Caco-2 (cell line): ENCODE measurements at regions of chr16 and their contacts with region 1.

Region 1: GRCh38 chr16:87950765-87951549 is at the start of gene BANP:
- DNase-seq: peak; percentile 99 to 100
- H3K4me3 ChIP-seq: peak within 1 kb of the TSS; percentile 85
- H3K4me3 Mint-ChIP-seq: peak within 1 kb of the TSS; percentile 93
- H3K27ac Mint-ChIP-seq: peak within 1 kb of the TSS; percentile 100
- H3K4me1 ChIP-seq: peaks cover 41% of the 10 kb centered on the region
- H3K4me1 Mint-ChIP-seq: peaks cover 45% of the 10 kb centered on the region
- H3K27me3 ChIP-seq: no peaks in the 10 kb centered on the region
- H3K27me3 Mint-ChIP-seq: no peaks in the 10 kb centered on the region
- CTCF ChIP-seq: peak; percentile 77 to 94
- total RNA-seq, gene BANP: 44.4 and 50.6 TPM in 2 replicates

Region 2: GRCh38 chr16:87834623-87835407 is 116.1 kb before region 1 on chr16:
- CTCF ChIA-PET with region 1: no interaction called
- POLR2A ChIA-PET with region 1: no interaction called
- intact Hi-C with region 1: no loop called
- DNase-seq: no peak
- H3K4me3 ChIP-seq: no peak overlapping the region
- H3K4me3 Mint-ChIP-seq: no peak overlapping the region
- H3K27ac Mint-ChIP-seq: no peak overlapping the region
- H3K4me1 ChIP-seq: 0 out of 2 replicates have a peak, but pooled peaks cover 11% of the 10 kb centered on the region
- H3K4me1 Mint-ChIP-seq: peaks cover 7% of the 10 kb centered on the region
- H3K27me3 ChIP-seq: no peaks in the 10 kb centered on the region
- H3K27me3 Mint-ChIP-seq: no peaks in the 10 kb centered on the region
- CTCF ChIP-seq: no peak

Region 3: DNA sequence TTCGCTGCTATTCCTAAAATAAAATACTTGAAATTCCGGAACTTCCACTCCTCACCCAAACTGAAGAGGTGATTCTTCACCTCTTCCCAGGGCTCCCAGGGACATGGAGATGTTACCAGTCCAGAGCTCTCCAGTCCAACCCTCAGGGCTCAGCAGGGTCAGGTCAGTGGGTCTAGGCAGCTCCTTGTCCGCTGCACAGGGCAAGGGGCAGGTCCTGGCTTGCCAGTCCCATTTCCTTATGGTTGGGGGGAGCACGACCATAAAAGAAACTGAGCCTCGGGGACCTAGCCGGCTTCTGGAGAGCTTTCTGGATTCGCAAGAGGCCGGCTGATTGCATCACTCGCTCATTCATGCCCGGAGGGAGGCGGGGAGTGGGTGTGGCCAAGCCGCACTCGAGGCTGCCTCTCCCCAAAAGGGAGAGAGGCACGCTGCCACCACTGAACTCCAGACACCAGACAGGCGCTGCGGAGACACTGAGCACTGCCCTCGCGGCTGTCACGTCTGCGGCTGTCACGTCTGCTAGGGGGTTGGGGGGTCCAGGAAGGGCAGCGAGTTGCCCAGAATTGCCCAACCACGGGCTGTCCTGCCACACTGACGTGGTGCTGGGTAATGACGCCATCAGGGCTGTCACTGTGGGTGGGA is 97.4 kb before region 1 on chr16:
- CTCF ChIA-PET with region 1: interaction called, 3 read pairs
- POLR2A ChIA-PET with region 1: interaction called, 3 read pairs
- intact Hi-C with region 1: loop called (anchors 5 kb)
- DNase-seq: peak; percentile 93 to 95
- H3K4me3 ChIP-seq: peak overlapping the region; percentile 17; the same call in 1 of the 2 replicates
- H3K4me3 Mint-ChIP-seq: peak overlapping the region; percentile 64
- H3K27ac Mint-ChIP-seq: peak overlapping the region; percentile 99
- H3K4me1 ChIP-seq: peaks cover 72% of the 10 kb centered on the region
- H3K4me1 Mint-ChIP-seq: peaks cover 52% of the 10 kb centered on the region
- H3K27me3 ChIP-seq: no peaks in the 10 kb centered on the region
- H3K27me3 Mint-ChIP-seq: no peaks in the 10 kb centered on the region
- CTCF ChIP-seq: no peak

Region 4: GRCh38 chr16:87877938-87878507 is 72.9 kb before region 1 on chr16:
- CTCF ChIA-PET with region 1: no interaction called
- POLR2A ChIA-PET with region 1: interaction called, 20 read pairs
- intact Hi-C with region 1: no loop called
- DNase-seq: peak in 1 of 2 experiments; percentile 18
- H3K4me3 ChIP-seq: no peak overlapping the region
- H3K4me3 Mint-ChIP-seq: no peak overlapping the region
- H3K27ac Mint-ChIP-seq: no peak overlapping the region
- H3K4me1 ChIP-seq: peaks cover 38% of the 10 kb centered on the region
- H3K4me1 Mint-ChIP-seq: peaks cover 19% of the 10 kb centered on the region
- H3K27me3 ChIP-seq: no peaks in the 10 kb centered on the region
- H3K27me3 Mint-ChIP-seq: no peaks in the 10 kb centered on the region
- CTCF ChIP-seq: no peak

Region 5: GRCh38 chr16:87930456-87930855 is 20.5 kb before region 1 on chr16:
- CTCF ChIA-PET with region 1: interaction called, 7 read pairs
- POLR2A ChIA-PET with region 1: no interaction called
- intact Hi-C with region 1: loop called (anchors 1 kb)
- DNase-seq: peak in 1 of 2 experiments; percentile 55
- H3K4me3 ChIP-seq: no peak overlapping the region
- H3K4me3 Mint-ChIP-seq: no peak overlapping the region
- H3K27ac Mint-ChIP-seq: peak overlapping the region; percentile 29
- H3K4me1 ChIP-seq: no peaks in the 10 kb centered on the region
- H3K4me1 Mint-ChIP-seq: peaks cover 10% of the 10 kb centered on the region
- H3K27me3 ChIP-seq: no peaks in the 10 kb centered on the region
- H3K27me3 Mint-ChIP-seq: no peaks in the 10 kb centered on the region
- CTCF ChIP-seq: peak; percentile 64 to 66

Region 6: DNA sequence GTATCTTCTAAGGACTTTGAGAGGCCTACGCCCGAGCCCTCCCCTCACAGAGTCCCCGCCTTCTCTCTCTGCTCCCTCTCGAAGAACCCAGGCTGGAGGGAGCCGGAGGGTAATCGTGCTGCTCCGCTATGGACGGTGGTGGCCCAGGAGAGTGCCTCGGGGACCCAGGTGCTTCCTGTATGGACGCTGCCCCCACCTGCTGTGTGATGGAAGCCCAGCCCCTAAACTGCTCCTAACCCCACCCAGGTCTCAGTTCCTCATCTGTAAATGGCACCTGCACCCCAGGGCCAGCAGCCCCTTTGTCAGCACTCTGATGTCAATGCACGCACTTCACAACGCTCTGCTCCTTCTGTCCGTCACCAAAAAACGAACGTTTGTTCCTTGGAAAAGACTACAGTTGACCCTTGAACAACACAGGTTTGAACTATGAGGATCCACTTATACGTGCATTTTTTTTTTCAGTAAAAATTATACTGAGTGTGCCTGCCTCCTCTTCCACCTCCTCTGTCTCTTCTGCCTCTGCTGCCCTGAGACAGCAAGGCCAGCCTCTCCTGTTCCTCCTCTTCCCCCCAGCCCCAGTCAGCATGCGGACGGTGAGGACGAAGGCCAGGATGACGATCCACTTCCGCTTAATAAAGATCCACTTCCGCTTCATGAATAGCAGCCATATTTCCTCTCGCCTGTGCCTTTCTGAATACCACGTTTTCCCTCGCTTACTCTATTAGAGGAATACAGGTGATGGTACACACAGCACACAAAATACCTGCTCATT is 118.6 kb after region 1 on chr16:
- CTCF ChIA-PET with region 1: no interaction called
- POLR2A ChIA-PET with region 1: no interaction called
- intact Hi-C with region 1: no loop called
- DNase-seq: no peak
- H3K4me3 ChIP-seq: no peak overlapping the region
- H3K4me3 Mint-ChIP-seq: no peak overlapping the region
- H3K27ac Mint-ChIP-seq: peak overlapping the region; percentile 5
- H3K4me1 ChIP-seq: no peaks in the 10 kb centered on the region
- H3K4me1 Mint-ChIP-seq: no peaks in the 10 kb centered on the region
- H3K27me3 ChIP-seq: no peaks in the 10 kb centered on the region
- H3K27me3 Mint-ChIP-seq: no peaks in the 10 kb centered on the region
- CTCF ChIP-seq: no peak